BJ (cell line): ENCODE measurements at regions of chr1 and their contacts with region 1.

Region 1: DNA sequence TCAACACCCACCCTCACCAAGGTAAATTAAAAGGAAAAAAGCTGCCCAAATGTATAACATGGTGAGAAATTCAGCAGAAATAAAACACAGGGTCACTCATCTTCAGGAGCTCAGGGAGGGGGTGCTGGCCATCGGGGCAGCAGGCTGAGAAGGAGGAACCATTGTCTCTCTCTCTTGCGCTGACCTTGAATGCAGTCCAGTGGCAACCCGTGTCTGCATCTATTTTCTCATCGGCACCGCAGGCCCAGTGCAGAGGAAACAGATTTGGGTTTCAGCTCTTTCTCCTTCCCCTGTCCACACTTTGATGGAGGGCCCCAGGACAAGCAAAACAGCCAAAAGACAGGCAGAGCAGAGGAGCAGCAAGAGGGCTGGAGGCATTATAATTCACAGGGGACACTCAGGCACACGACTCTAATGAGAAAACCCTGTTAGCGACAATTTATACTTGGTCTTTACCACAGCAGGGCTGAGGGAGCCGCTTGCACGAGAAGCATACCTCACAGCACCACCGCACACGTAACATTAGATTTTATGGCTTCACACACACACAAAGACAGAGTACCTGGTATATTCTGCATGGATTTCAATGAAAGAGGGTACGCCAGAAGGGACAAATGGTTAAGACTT is 18.6 kb downstream of the MKNK1 start:
- DNase-seq: no peak
- H3K4me3 ChIP-seq: no peak overlapping the region
- H3K27me3 ChIP-seq: no peaks in the 10 kb centered on the region
- CTCF ChIP-seq: no peak

Region 2: GRCh38 chr1:46603858-46604549 is 18.6 kb after region 1 on chr1 and contains the start of gene MKNK1:
- CTCF ChIA-PET with region 1: interaction called, 4 read pairs
- POLR2A ChIA-PET with region 1: interaction called, 16 read pairs
- DNase-seq: peak; percentile 63
- H3K4me3 ChIP-seq: peak within 1 kb of the TSS; percentile 96
- H3K27me3 ChIP-seq: no peaks in the 10 kb centered on the region
- CTCF ChIP-seq: peak; percentile 29; the same call in 1 of the 2 replicates
- polyA plus RNA-seq, gene MKNK1: 25.7 and 30.1 TPM in 2 replicates